PC-9 (cell line): ENCODE measurements at regions of chr4 and their contacts with region 1.

Region 1: DNA sequence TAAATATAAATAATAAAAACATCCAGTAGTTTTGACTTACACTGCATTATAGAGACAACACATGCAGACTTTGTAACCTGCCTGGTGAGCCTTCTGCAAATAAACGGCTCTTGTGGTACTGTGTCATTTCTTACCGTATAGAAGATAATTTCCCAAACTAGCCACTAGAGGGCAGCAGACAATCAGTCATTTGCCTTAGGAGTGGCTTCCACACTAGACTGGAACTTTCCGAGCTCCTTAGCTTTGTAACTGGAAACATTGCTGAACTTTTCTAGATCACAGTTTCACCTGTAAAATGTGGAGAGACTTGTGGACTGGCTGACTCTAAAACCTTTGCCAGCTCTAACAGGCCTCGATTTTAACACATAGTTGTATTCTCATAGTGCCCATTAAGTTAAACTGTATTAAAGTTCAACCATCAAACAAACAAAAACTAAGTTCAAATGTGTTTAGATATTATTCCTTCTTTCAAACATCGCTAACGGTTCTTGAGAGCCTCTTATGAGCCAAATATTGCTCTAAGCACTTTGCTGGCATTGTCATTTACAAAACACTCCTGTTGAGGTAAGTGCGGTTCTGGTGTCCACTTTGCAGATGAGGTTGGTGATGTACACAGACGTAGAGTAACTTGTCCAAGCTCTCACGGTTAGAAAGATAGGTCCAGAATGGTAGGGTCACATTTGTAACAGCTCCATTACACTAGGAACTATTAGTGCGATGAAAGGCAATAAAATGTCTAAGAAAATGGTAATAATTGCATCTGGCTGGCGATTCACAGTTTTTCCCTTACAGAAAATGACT is 345.5 kb downstream of the ANK2 start:
- DNase-seq: peak; percentile 39 to 60
- H3K4me3 ChIP-seq: no peak overlapping the region
- H3K27ac ChIP-seq: no peak overlapping the region
- H3K4me1 ChIP-seq: no peaks in the 10 kb centered on the region; the same call in 1 of the 2 replicates
- H3K27me3 ChIP-seq: no peaks in the 10 kb centered on the region
- CTCF ChIP-seq: peak; percentile 83

Region 2: GRCh38 chr4:113278324-113278934 is 116.5 kb before region 1 on chr4:
- CTCF ChIA-PET with region 1: interaction called, 3 read pairs
- POLR2A ChIA-PET with region 1: interaction called, 9 read pairs
- intact Hi-C with region 1: loop called (anchors 10 kb)
- DNase-seq: peak in 1 of 2 experiments; percentile 38
- H3K4me3 ChIP-seq: no peak overlapping the region
- H3K27ac ChIP-seq: no peak overlapping the region
- H3K4me1 ChIP-seq: no peaks in the 10 kb centered on the region
- H3K27me3 ChIP-seq: no peaks in the 10 kb centered on the region
- CTCF ChIP-seq: peak; percentile 65

Region 3: DNA sequence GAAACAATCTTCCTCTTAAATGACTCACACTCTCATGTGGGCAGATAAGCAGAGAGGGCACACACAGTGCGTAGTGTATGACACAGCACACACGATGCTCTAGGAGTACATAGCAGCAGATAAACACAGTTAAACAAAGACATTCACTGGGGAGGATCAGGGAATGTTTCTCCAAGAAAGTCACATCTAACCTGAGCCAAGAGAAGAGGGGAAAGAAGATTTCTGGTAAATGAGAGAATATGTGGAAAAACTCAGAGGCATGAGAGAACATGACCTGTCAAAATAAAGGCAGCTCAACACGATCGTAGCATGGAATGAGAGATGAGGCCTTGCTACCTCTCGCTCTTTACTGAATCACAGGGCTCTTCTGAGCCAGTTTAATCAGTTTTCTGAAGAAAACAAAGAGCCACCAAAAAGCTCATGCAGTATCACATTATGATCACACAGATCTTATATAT is 94.4 kb before region 1 on chr4:
- CTCF ChIA-PET with region 1: no interaction called
- POLR2A ChIA-PET with region 1: no interaction called
- intact Hi-C with region 1: no loop called
- DNase-seq: no peak
- H3K4me3 ChIP-seq: no peak overlapping the region
- H3K27ac ChIP-seq: no peak overlapping the region
- H3K4me1 ChIP-seq: no peaks in the 10 kb centered on the region
- H3K27me3 ChIP-seq: no peaks in the 10 kb centered on the region
- CTCF ChIP-seq: no peak

Region 4: GRCh38 chr4:113761620-113762185 is 366.8 kb after region 1 on chr4 and contains the start of gene CAMK2D:
- CTCF ChIA-PET with region 1: no interaction called
- POLR2A ChIA-PET with region 1: no interaction called
- intact Hi-C with region 1: loop called (anchors 1 kb)
- DNase-seq: peak; percentile 56 to 70
- H3K4me3 ChIP-seq: peak within 1 kb of the TSS; percentile 71
- H3K27ac ChIP-seq: peak within 1 kb of the TSS; percentile 91
- H3K4me1 ChIP-seq: peaks cover 16% of the 10 kb centered on the region
- H3K27me3 ChIP-seq: no peaks in the 10 kb centered on the region
- CTCF ChIP-seq: peak; percentile 38; the same call in 1 of the 2 replicates
- total RNA-seq, gene CAMK2D: 7.1 and 10.5 TPM in 2 replicates

Region 5: GRCh38 chr4:113979905-113980615 is 585.1 kb after region 1 on chr4:
- CTCF ChIA-PET with region 1: no interaction called
- POLR2A ChIA-PET with region 1: interaction called, 16 read pairs
- intact Hi-C with region 1: no loop called
- DNase-seq: no peak
- H3K4me3 ChIP-seq: peak overlapping the region; percentile 55
- H3K27ac ChIP-seq: no peak overlapping the region
- H3K4me1 ChIP-seq: no peaks in the 10 kb centered on the region
- H3K27me3 ChIP-seq: no peaks in the 10 kb centered on the region
- CTCF ChIP-seq: no peak

Region 6: GRCh38 chr4:114378306-114378903 is 983.5 kb after region 1 on chr4:
- CTCF ChIA-PET with region 1: interaction called, 3 read pairs
- POLR2A ChIA-PET with region 1: no interaction called
- intact Hi-C with region 1: loop called (anchors 1 kb)
- DNase-seq: peak in 1 of 2 experiments; percentile 5
- H3K4me3 ChIP-seq: no peak overlapping the region
- H3K27ac ChIP-seq: no peak overlapping the region
- H3K4me1 ChIP-seq: no peaks in the 10 kb centered on the region
- H3K27me3 ChIP-seq: no peaks in the 10 kb centered on the region
- CTCF ChIP-seq: no peak